Right cardiac atrium (tissue), 5 donors: ENCODE measurements at regions of chr19 and their contacts with region 1.

Region 1: DNA sequence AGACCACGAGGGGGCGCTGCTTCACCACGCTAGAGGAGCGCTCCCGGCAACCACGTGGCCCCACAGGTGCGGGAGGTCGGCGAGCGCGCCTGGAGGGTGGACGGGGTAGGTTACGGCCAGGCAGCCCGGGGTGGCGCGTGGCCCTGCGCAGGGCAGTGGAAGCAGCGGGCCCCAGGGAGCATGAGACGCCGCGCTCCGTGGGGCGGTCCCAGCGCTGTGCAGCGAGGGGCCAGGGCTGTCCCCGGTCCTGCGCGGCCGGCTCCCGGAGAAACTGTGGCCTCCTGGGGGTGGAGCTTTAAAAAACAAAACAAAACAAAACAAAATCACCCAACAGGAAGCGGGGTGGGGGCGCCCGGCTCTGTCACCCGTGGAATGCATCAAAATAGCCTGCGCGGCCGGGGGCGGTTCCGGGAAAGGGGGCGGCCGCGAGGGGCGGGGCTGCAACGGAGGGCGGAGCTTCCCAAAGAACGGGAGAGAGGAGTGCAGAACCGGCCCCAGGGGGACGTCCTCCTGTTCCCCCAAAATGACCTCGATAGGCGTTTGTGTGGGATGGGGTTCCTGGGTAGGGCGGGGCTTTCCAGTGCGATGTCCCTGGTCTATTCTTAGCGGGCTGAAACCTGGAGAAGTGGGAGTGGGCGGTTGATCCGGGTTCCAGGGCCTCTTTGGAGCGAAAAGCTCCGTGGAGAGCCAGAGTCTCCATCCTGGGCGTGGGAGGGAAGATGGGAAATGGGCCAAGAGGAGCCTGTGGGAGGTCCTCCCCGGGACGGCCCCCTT is 27.3 kb downstream of the NUMBL start:
- DNase-seq: peak; percentile 92 to 97 (median 97)
- ATAC-seq: peak; percentile 90 to 92
- H3K4me3 ChIP-seq: peak overlapping the region; percentile 20
- H3K27ac ChIP-seq: peak overlapping the region; percentile 71
- H3K4me1 ChIP-seq: peaks cover 3% of the 10 kb centered on the region
- H3K27me3 ChIP-seq: no peaks in the 10 kb centered on the region

Region 2: GRCh38 chr19:40716655-40717324 is 53.7 kb after region 1 on chr19 and contains the starts of genes COQ8B and ITPKC:
- intact Hi-C with region 1: loop called in 1 of 4 experiments (anchors 10 kb)
- DNase-seq: peak; percentile 100
- ATAC-seq: peak; percentile 75 to 80
- H3K4me3 ChIP-seq: peak within 1 kb of the TSS; percentile 89
- H3K27ac ChIP-seq: peak within 1 kb of the TSS; percentile 100
- H3K4me1 ChIP-seq: peaks cover 10% of the 10 kb centered on the region
- H3K27me3 ChIP-seq: no peaks in the 10 kb centered on the region
- total RNA-seq, gene COQ8B: 22.8 to 34.0 (median 29.0) TPM
- total RNA-seq, gene ITPKC: 7.6 to 15.8 (median 10.8) TPM

Region 3: GRCh38 chr19:40799558-40800326 is 136.6 kb after region 1 on chr19:
- intact Hi-C with region 1: loop called in 1 of 4 experiments (anchors 5 kb)
- DNase-seq: peak; percentile 78 to 90 (median 89)
- ATAC-seq: peak; percentile 8 to 46
- H3K4me3 ChIP-seq: peak overlapping the region; percentile 89
- H3K27ac ChIP-seq: peak overlapping the region; percentile 63
- H3K4me1 ChIP-seq: peaks cover 39% of the 10 kb centered on the region
- H3K27me3 ChIP-seq: no peaks in the 10 kb centered on the region

Region 4: GRCh38 chr19:40806488-40807468 is 143.7 kb after region 1 on chr19:
- intact Hi-C with region 1: loop called in 2 of 4 experiments (anchors 5 kb)
- DNase-seq: peak; percentile 88 to 93 (median 92)
- ATAC-seq: peak; percentile 49 to 72
- H3K4me3 ChIP-seq: no peak overlapping the region
- H3K27ac ChIP-seq: peak overlapping the region; percentile 71
- H3K4me1 ChIP-seq: peaks cover 46% of the 10 kb centered on the region
- H3K27me3 ChIP-seq: no peaks in the 10 kb centered on the region

Region 5: DNA sequence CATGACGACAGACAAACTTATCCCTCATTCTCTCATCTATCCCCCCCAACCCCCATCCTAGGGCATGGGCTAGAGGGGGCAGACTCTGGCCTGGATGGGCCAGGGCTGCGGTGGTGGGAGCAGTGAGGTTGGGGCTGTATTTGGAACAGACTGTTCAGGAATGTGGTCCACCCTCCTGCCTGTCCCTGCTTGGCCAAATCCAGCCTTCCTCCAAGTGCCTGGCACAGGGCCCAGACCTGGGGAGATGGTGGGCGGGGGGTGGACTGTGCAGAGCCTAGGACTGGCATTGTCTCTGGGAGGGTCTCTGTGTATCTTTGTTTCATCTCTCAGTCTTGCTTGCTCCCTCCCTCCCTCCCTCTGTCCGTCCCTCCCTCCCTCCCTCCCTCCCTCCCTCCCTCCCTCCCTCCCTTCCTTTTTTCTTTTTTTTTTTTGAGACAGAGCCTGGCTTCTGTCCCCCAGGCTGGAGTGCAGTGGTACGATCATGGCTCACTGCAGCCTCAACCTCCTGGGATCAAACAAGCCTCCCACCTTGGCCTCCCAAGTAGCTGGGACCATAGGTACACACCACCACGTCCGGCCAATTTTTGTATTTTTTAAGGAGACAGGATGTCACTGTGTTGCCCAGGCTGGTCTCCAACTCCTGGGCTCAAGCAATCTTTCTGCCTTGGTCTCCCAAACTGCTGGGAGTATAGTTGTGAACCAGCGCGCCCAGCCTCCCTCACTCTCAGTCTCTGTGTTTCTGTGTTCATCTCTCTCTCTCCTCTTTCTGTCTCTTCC is 150.3 kb after region 1 on chr19:
- intact Hi-C with region 1: loop called (anchors 2 to 5 kb)
- DNase-seq: peak; percentile 36 to 81 (median 78)
- ATAC-seq: peak in 1 of 2 donors; percentile 0
- H3K4me3 ChIP-seq: no peak overlapping the region
- H3K27ac ChIP-seq: no peak overlapping the region
- H3K4me1 ChIP-seq: peaks cover 2% of the 10 kb centered on the region
- H3K27me3 ChIP-seq: no peaks in the 10 kb centered on the region

Region 6: GRCh38 chr19:41144403-41144802 is 481.3 kb after region 1 on chr19:
- intact Hi-C with region 1: loop called (anchors 2 to 5 kb)
- DNase-seq: peak; percentile 74 to 93 (median 75)
- ATAC-seq: peak; percentile 74 to 83
- H3K4me3 ChIP-seq: no peak overlapping the region
- H3K27ac ChIP-seq: no peak overlapping the region
- H3K4me1 ChIP-seq: no peaks in the 10 kb centered on the region
- H3K27me3 ChIP-seq: no peaks in the 10 kb centered on the region

Region 7: DNA sequence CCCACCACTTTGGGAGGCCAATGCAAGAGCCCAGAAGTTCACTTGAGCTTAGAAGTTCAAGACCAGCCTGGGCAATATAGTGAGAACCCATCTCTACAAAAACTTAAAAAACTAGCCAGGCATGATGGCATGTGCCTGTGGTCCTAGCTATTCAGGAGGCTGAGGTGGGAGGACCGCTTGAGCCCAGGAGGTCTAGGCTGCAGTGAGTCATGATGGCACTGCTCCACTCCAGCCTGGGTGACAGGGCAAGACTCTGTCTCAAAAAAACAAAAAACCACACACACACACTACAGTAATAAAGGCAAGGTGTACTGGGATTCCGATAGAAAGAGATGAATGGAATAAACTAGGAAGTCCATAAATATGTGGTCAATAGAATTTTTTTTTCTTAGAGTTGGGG is 486.7 kb after region 1 on chr19:
- intact Hi-C with region 1: loop called in 2 of 4 experiments (anchors 2 to 5 kb)
- DNase-seq: no peak
- ATAC-seq: no peak
- H3K4me3 ChIP-seq: no peak overlapping the region
- H3K27ac ChIP-seq: no peak overlapping the region
- H3K4me1 ChIP-seq: no peaks in the 10 kb centered on the region
- H3K27me3 ChIP-seq: no peaks in the 10 kb centered on the region